Mammary epithelial cell (primary cell): ENCODE measurements at regions of chr6 and their contacts with region 1.

Region 1: DNA sequence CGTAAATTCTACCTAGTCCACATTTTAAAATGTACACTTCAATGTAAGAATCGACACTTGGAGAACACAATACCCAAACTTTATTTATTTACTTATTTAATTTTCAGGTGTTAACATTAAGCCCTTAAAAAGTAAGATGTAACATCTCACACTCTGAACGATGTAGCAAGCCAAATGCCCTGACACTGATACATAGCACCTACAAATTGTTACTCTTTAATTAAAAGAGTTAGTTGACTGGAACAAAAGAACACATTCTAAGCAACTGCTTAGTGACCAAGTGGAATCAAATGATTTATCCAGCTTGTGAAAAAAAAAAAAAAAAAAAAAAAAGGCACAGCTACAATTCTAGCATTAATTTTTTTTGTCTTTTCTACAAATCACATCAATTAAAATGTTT is 292.1 kb upstream of the THEMIS start:
- DNase-seq: no peak
- H3K4me3 ChIP-seq: no peak overlapping the region
- H3K27ac ChIP-seq: no peak overlapping the region
- H3K4me1 ChIP-seq: no peaks in the 10 kb centered on the region
- H3K27me3 ChIP-seq: no peaks in the 10 kb centered on the region
- CTCF ChIP-seq: no peak

Region 2: DNA sequence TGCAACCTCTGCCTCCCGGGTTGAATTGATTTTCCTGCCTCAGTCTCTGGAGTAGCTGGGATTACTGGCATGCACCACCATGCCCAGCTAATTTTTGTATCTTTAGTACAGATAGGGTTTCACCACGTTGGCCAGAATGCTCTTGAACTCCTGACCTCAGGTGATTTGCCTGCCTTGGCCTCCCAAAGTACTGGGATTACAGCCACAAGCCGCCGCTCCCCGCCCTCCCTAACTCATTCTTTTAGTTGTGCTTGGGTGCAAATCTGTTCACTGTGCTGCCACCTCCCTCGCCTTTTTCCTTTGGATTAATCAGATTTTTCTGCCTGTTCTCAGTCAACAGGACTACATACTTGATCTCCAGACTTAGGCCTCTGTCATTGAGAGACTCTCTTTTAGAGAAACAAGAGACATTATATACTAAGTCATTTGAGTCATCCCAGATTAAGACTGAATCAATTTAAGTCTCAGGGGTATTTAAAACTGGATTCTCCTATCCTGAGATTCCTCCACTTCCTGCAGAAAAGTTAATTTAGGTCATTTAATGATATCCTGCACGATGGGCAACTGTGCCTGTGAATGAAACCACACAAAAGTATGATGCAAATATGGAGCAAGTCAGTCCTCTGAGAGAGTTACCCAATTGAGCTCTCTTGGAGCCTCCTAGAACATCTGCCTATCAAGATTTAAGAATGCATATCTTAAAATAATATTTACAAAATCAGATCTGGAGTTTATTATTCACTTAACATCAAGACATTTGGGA is 156.0 kb before region 1 on chr6:
- CTCF ChIA-PET with region 1: interaction called, 20 read pairs
- dilution Hi-C with region 1: no loop called
- in situ Hi-C with region 1: no loop called
- intact Hi-C with region 1: no loop called
- DNase-seq: no peak
- H3K4me3 ChIP-seq: no peak overlapping the region
- H3K27ac ChIP-seq: no peak overlapping the region
- H3K4me1 ChIP-seq: no peaks in the 10 kb centered on the region
- H3K27me3 ChIP-seq: no peaks in the 10 kb centered on the region
- CTCF ChIP-seq: no peak